H1 (cell line): ENCODE measurements at regions of chr3 and their contacts with region 1.

Region 1: GRCh38 chr3:153173758-153174516 is 11.9 kb downstream of the RAP2B start:
- DNase-seq: no peak
- H3K4me3 ChIP-seq: no peak overlapping the region
- H3K27ac ChIP-seq: no peak overlapping the region
- H3K4me1 ChIP-seq: no peaks in the 10 kb centered on the region
- H3K27me3 ChIP-seq: no peaks in the 10 kb centered on the region
- CTCF ChIP-seq: peak in 2 of 3 experiments; percentile 30 to 65; a peak in 3 of 4 replicates
- EP300 ChIP-seq: no peak
- POLR2A ChIP-seq: no peak
- RAD21 ChIP-seq: peak; percentile 43 to 59; a peak in 3 of 4 replicates

Region 2: GRCh38 chr3:153043729-153044328 is 130.1 kb before region 1 on chr3:
- CTCF ChIA-PET with region 1: no interaction called
- POLR2A ChIA-PET with region 1: no interaction called
- DNase-seq: no peak
- H3K4me3 ChIP-seq: no peak overlapping the region
- H3K27ac ChIP-seq: no peak overlapping the region
- H3K4me1 ChIP-seq: no peaks in the 10 kb centered on the region
- H3K27me3 ChIP-seq: no peaks in the 10 kb centered on the region
- CTCF ChIP-seq: no peak
- EP300 ChIP-seq: no peak
- POLR2A ChIP-seq: no peak
- RAD21 ChIP-seq: no peak

Region 3: DNA sequence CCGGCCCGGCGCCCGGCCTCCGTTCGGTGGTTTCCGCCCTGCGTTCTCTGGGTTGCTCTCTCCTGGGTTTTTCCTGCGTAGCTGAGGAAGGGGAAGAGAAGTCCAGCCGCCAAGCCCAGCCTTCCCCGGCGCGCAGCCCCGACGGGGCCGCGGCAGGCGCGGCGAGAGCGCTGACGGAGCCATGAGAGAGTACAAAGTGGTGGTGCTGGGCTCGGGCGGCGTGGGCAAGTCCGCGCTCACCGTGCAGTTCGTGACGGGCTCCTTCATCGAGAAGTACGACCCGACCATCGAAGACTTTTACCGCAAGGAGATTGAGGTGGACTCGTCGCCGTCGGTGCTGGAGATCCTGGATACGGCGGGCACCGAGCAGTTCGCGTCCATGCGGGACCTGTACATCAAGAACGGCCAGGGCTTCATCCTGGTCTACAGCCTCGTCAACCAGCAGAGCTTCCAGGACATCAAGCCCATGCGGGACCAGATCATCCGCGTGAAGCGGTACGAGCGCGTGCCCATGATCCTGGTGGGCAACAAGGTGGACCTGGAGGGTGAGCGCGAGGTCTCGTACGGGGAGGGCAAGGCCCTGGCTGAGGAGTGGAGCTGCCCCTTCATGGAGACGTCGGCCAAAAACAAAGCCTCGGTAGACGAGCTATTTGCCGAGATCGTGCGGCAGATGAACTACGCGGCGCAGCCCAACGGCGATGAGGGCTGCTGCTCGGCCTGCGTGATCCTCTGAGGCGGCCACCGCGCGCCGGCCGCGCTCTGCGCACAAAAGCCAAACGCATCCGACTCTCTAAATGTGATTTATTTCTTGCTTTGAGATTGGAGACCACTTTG is 11.2 kb before region 1 on chr3:
- CTCF ChIA-PET with region 1: interaction called, 18 read pairs
- POLR2A ChIA-PET with region 1: interaction called, 6 read pairs
- DNase-seq: peak in 1 of 2 experiments; percentile 59
- H3K4me3 ChIP-seq: peak overlapping the region; percentile 88 to 94 (median 91)
- H3K27ac ChIP-seq: no peak overlapping the region
- H3K4me1 ChIP-seq: peaks cover 0 to 11% (median under 1%) of the 10 kb centered on the region in 4 experiments; a peak in 5 of 7 replicates
- H3K27me3 ChIP-seq: peaks cover 0 to 3% (median 0%) of the 10 kb centered on the region in 4 experiments; a peak in 2 of 7 replicates
- CTCF ChIP-seq: no peak
- EP300 ChIP-seq: no peak
- POLR2A ChIP-seq: no peak
- RAD21 ChIP-seq: no peak